Activated CD4-positive, alpha-beta memory T cell treated with anti-CD3 and anti-CD28 coated beads for 36 hours (primary cell): ENCODE measurements at regions of chr13 and their contacts with region 1.

Region 1: DNA sequence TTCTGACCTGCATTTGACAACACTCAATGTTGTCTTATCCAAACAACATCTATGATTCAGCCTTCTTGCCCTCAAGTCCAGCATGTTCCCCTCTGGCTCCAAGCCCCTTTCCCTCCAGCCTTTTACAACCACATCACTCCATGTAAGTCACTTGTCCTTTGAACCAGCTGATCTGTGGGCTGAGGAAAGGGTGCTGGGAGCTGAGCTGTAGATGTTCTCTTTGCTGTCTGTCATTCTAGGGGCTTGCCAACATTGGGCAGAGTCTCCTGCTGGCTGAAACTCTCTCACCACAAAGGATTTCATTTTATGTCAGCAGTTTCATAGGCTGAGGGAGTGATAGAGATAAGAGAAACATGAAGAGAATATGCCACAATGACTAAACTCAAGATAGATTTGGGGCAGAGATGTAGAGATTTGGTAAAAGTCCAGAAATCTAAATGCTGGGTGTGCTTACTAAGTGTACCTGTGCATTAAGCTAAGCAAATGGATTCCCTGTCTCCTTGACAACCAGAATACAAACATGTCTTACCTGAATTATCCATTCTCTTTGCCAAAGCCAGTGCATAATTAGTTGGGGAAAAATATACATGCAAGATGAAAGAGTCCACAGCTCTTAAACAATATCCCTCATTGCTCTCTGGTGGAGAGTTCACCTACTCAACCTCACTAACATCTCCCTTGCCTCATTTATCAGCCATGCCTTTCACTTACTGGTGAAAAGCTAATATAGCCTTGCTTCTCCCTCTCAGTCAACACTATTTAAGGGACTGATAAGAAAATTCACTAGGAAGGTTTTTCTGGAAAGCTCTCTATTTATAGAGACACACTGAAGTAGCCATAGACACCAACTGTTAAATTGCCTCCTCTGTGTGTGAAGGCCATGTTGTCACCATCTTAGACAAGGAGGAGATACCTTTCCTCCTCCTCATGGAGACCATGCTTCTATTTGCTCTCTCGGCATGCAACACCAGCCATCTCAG is 175.5 kb upstream of the SERP2 start:
- DNase-seq: peak; percentile 60
- H3K4me3 Mint-ChIP-seq: no peak overlapping the region
- H3K27ac Mint-ChIP-seq: no peak overlapping the region
- H3K4me1 Mint-ChIP-seq: peaks cover 34% of the 10 kb centered on the region
- H3K27me3 Mint-ChIP-seq: peaks cover 16% of the 10 kb centered on the region

Region 2: GRCh38 chr13:44243198-44243857 is 45.2 kb after region 1 on chr13:
- CTCF ChIA-PET with region 1: no interaction called
- POLR2A ChIA-PET with region 1: no interaction called
- intact Hi-C with region 1: loop called (anchors 5 kb)
- DNase-seq: peak; percentile 34
- H3K4me3 Mint-ChIP-seq: no peak overlapping the region
- H3K27ac Mint-ChIP-seq: no peak overlapping the region
- H3K4me1 Mint-ChIP-seq: no peaks in the 10 kb centered on the region
- H3K27me3 Mint-ChIP-seq: peaks cover 7% of the 10 kb centered on the region

Region 3: DNA sequence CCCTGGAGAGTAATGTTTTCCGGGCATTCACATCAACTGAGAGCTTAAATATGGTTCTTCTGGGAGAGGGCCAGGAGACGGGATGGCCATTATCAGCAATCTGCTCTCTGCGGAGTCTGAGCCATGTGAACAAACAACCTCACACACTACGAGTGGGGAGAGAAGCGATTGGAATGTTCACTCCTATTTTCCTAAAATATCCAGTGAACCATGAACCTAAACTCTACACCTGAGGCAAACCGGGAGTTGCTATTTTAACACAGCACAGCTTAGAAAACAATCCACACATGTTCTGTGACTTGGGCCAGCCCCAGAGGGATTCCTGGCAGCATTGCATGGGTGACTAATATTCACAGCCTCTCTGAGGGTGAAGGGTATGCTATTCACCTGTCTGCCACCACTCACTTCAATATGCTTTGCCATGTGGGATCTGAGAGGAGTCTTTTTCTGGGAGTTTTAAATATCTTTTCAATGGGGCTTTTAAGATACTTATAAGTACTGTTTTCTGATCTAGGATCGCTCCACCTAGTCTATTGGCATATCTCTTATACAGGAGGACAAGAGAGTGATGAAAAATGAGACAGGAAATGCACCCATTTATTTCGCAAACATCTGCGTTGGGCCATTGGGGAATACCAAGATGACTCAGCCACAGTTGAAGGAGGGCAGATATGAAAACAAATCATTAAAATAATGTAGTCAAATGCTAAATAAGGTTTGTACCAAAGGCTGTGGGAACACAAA is 103.0 kb after region 1 on chr13:
- CTCF ChIA-PET with region 1: no interaction called
- POLR2A ChIA-PET with region 1: no interaction called
- intact Hi-C with region 1: no loop called
- DNase-seq: peak; percentile 55
- H3K4me3 Mint-ChIP-seq: no peak overlapping the region
- H3K27ac Mint-ChIP-seq: no peak overlapping the region
- H3K4me1 Mint-ChIP-seq: peaks cover 24% of the 10 kb centered on the region
- H3K27me3 Mint-ChIP-seq: peaks cover 10% of the 10 kb centered on the region

Region 4: GRCh38 chr13:44373601-44374348 is 175.7 kb after region 1 on chr13 and contains the start of gene SERP2:
- CTCF ChIA-PET with region 1: no interaction called
- POLR2A ChIA-PET with region 1: no interaction called
- intact Hi-C with region 1: no loop called
- DNase-seq: peak; percentile 15
- H3K4me3 Mint-ChIP-seq: no peak within 1 kb of the TSS
- H3K27ac Mint-ChIP-seq: no peak within 1 kb of the TSS
- H3K4me1 Mint-ChIP-seq: no peaks in the 10 kb centered on the region
- H3K27me3 Mint-ChIP-seq: peaks cover 35% of the 10 kb centered on the region
- total RNA-seq, gene SERP2: not detected